ENCODE measurements at regions of chr9 and their contacts with region 1.

Region 1: DNA sequence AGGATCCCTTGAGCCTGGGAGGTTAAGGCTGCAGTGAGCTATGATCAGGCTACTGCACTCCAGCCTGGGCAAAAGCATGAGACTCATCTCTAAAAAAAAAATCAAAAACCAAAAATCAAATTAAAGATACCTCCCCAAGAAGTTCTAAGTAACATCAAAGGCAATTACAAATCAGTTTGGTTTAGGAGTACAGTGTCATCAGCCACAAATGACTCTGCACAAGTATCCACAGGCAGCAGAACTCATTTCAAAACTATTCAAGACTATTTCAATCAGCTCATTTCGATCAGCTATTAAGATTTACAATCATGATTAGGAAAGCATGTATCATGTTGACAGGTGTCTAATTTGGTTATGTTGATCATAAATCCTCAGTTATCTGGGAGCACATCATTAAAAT is 19.1 kb downstream of the TRMO start:
- DNase-seq: no peak
- H3K4me3 ChIP-seq: no peak overlapping the region
- H3K27ac ChIP-seq: no peak overlapping the region
- H3K4me1 ChIP-seq: no peaks in the 10 kb centered on the region
- H3K27me3 ChIP-seq: no peaks in the 10 kb centered on the region
- CTCF ChIP-seq: no peak

Region 2: GRCh38 chr9:97710356-97711222 is 192.6 kb before region 1 on chr9:
- intact Hi-C with region 1: loop called (anchors 2 kb)
- DNase-seq: peak in 1 of 2 donors; percentile 37
- H3K4me3 ChIP-seq: no peak overlapping the region
- H3K27ac ChIP-seq: no peak overlapping the region
- H3K4me1 ChIP-seq: no peaks in the 10 kb centered on the region
- H3K27me3 ChIP-seq: peaks cover 0 to 11% of the 10 kb centered on the region in 2 donors
- CTCF ChIP-seq: peak; percentile 73 to 87

Measured in tibial artery (tissue), 4 donors.